Mammary epithelial cell (primary cell): ENCODE measurements at regions of chr14 and their contacts with region 1.

Region 1: DNA sequence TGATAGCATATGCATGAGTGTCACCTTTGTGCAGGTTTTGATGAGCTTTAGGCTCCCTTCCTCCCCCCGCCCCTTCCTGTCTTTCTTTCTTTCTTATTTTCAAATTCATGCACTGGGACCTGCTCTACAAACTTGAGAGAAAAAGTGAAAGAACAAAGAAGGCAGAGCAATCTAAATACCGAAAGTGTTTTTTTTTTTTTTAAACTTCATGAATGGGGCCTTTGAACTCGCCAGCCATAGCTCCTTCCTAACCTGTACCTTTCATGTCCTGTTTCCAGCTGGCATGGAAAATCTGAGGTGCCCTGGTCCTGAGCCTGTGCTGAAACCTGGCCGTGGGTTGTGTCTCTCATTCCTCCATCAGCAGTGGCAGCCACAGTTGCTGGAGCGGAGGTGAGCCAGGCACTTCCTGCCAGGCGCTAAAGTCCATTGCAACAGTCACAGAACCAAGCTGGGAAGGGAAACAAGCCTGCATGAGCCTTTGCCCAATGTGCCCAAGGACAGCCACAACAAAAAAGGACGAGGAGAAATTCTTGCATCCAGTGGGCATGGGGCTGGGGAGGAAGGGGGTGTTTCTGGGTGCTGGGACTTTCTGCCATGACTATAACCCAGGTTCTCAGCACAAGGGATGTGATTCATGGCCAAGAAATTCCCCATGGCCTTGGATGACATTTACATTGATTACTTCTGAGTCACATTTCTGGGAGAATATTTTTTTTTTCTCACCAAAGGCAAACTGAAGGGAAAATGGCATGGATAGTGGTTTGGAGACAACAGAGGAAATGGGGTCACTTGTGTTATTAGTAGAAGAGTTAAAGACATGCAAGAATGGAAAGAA is 102.7 kb downstream of the TMEM30B start:
- DNase-seq: peak; percentile 94
- H3K4me3 ChIP-seq: peak overlapping the region in 1 of 3 experiments; percentile 30
- H3K27ac ChIP-seq: peak overlapping the region; percentile 91
- H3K4me1 ChIP-seq: peaks cover 40% of the 10 kb centered on the region
- H3K27me3 ChIP-seq: no peaks in the 10 kb centered on the region
- CTCF ChIP-seq: no peak

Region 2: GRCh38 chr14:61034416-61035120 is 143.9 kb before region 1 on chr14:
- CTCF ChIA-PET with region 1: no interaction called
- dilution Hi-C with region 1: no loop called
- in situ Hi-C with region 1: loop called in 1 of 2 experiments (anchors 25 kb)
- intact Hi-C with region 1: loop called (anchors 5 kb)
- DNase-seq: peak; percentile 34
- H3K4me3 ChIP-seq: no peak overlapping the region
- H3K27ac ChIP-seq: no peak overlapping the region
- H3K4me1 ChIP-seq: peaks cover 4% of the 10 kb centered on the region
- H3K27me3 ChIP-seq: no peaks in the 10 kb centered on the region
- CTCF ChIP-seq: no peak

Region 3: GRCh38 chr14:61106959-61107641 is 71.3 kb before region 1 on chr14:
- CTCF ChIA-PET with region 1: no interaction called
- dilution Hi-C with region 1: no loop called
- in situ Hi-C with region 1: no loop called
- intact Hi-C with region 1: no loop called
- DNase-seq: no peak
- H3K4me3 ChIP-seq: no peak overlapping the region
- H3K27ac ChIP-seq: no peak overlapping the region
- H3K4me1 ChIP-seq: peaks cover 27% of the 10 kb centered on the region
- H3K27me3 ChIP-seq: no peaks in the 10 kb centered on the region
- CTCF ChIP-seq: peak; percentile 16 to 41

Region 4: GRCh38 chr14:61145034-61145902 is 33.2 kb before region 1 on chr14:
- CTCF ChIA-PET with region 1: no interaction called
- dilution Hi-C with region 1: no loop called
- in situ Hi-C with region 1: no loop called
- intact Hi-C with region 1: loop called (anchors 1 kb)
- DNase-seq: peak; percentile 82
- H3K4me3 ChIP-seq: no peak overlapping the region
- H3K27ac ChIP-seq: peak overlapping the region; percentile 82
- H3K4me1 ChIP-seq: peaks cover 51% of the 10 kb centered on the region
- H3K27me3 ChIP-seq: no peaks in the 10 kb centered on the region
- CTCF ChIP-seq: no peak

Region 5: DNA sequence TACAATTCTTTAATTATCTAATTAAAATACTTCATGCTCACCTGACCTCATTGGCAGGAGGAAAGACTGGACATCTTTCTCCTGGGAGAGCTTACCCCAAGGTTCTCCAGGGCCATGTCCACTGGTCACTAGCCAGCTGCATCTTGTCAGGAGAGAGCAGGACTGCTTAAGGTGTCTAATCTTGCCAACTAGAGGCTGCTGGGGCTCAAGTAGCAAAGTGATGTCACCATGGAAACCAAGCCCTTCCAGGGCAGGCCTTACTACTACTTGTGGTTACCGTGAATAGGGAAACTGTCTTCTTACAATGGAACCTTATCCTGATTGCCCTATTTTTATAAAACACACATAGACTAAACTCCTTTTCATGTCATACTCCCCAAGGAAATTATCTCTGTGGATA is 960.1 kb after region 1 on chr14:
- CTCF ChIA-PET with region 1: no interaction called
- dilution Hi-C with region 1: no loop called
- in situ Hi-C with region 1: no loop called
- intact Hi-C with region 1: no loop called
- DNase-seq: no peak
- H3K4me3 ChIP-seq: no peak overlapping the region
- H3K27ac ChIP-seq: no peak overlapping the region
- H3K4me1 ChIP-seq: no peaks in the 10 kb centered on the region
- H3K27me3 ChIP-seq: no peaks in the 10 kb centered on the region
- CTCF ChIP-seq: no peak